HEK293 (cell line): ENCODE measurements at regions of chr15 and their contacts with region 1.

Region 1: DNA sequence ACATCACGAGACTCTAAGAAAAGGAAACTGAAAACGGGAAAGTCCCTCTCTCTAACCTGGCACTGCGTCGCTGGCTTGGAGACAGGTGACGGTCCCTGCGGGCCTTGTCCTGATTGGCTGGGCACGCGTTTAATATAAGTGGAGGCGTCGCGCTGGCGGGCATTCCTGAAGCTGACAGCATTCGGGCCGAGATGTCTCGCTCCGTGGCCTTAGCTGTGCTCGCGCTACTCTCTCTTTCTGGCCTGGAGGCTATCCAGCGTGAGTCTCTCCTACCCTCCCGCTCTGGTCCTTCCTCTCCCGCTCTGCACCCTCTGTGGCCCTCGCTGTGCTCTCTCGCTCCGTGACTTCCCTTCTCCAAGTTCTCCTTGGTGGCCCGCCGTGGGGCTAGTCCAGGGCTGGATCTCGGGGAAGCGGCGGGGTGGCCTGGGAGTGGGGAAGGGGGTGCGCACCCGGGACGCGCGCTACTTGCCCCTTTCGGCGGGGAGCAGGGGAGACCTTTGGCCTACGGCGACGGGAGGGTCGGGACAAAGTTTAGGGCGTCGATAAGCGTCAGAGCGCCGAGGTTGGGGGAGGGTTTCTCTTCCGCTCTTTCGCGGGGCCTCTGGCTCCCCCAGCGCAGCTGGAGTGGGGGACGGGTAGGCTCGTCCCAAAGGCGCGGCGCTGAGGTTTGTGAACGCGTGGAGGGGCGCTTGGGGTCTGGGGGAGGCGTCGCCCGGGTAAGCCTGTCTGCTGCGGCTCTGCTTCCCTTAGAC is at the start of gene B2M:
- H3K4me3 ChIP-seq: peak within 1 kb of the TSS; percentile 89
- H3K27ac ChIP-seq: peak within 1 kb of the TSS; percentile 69
- H3K4me1 ChIP-seq: no peaks in the 10 kb centered on the region
- CTCF ChIP-seq: no peak; the same call in 1 of the 2 replicates

Region 2: DNA sequence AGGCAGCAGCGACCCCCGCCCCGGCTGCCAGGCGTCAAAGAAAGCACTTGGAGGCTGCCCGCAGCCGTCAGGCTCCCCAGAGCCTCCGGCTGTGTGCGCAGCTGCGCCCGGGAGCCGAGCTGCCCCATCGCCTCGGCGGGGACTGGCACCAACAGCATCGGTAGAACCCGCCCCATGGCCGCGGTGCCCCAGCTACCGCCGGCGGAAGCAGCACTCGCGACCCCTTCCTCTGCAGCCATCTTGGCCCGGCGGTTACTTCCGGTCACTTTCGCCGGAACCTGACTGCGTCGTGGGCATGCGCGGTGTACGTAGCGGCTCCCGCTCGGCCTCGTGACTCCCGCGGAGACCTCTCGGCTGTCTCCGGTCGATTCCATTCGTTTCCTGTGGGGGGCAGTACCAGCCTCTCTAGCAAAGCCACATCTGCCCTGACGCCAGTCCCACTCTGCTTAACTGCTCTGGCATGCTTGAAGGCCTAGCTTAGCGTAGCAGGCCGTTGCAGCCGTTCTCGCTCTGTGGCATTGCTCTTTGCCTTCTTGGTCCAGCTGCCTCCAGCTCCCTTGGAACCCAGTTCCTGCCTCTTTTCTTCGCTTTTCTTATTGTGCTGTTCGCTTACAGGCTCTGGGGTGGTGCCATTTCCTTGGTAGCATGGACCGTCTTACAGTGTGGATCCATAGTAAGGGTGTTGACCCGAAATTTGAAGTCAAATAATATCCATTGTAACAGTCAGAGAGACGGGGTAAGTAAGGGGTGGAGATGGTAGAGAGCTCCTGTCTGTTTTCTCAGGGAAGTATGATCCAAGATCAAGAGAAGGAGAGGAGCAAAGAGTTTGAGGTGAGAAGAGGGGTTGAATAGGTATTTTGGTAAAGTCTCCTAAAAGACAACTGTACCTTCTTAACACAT is 47.9 kb before region 1 on chr15 and contains the start of gene SPG11:
- CTCF ChIA-PET with region 1: interaction called, 13 read pairs
- POLR2A ChIA-PET with region 1: interaction called, 28 read pairs
- H3K4me3 ChIP-seq: peak within 1 kb of the TSS; percentile 93
- H3K27ac ChIP-seq: peak within 1 kb of the TSS; percentile 63; the same call in 1 of the 2 replicates
- H3K4me1 ChIP-seq: no peaks in the 10 kb centered on the region
- CTCF ChIP-seq: peak; percentile 97

Region 3: DNA sequence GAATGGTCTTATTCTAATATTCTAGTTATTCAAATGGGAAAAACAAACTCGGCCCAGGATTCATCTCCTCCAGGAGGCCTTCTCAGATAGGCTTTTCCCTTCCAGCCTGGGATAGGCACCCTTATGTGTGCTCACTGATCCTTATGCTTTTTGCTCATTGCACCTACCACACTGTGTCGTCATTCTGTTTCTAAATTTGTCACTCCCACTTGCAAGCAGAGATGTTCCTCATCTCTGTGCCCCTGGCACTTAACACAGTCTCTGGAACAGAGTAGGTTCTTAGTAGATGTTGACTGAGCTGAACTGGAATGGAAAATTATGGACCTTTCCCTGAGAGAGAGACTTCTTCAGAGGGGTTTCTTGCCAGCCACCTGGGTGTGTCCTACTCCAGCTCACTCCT is 29.3 kb before region 1 on chr15:
- CTCF ChIA-PET with region 1: interaction called, 7 read pairs
- POLR2A ChIA-PET with region 1: interaction called, 15 read pairs
- H3K4me3 ChIP-seq: no peak overlapping the region
- H3K27ac ChIP-seq: no peak overlapping the region
- H3K4me1 ChIP-seq: peaks cover 3% of the 10 kb centered on the region; the same call in 1 of the 2 replicates
- CTCF ChIP-seq: no peak

Region 4: GRCh38 chr15:44728576-44729407 is 17.3 kb after region 1 on chr15:
- CTCF ChIA-PET with region 1: interaction called, 5 read pairs
- POLR2A ChIA-PET with region 1: interaction called, 37 read pairs
- H3K4me3 ChIP-seq: peak overlapping the region; percentile 69
- H3K27ac ChIP-seq: peak overlapping the region; percentile 85
- H3K4me1 ChIP-seq: peaks cover 7% of the 10 kb centered on the region; the same call in 1 of the 2 replicates
- CTCF ChIP-seq: no peak

Region 5: GRCh38 chr15:44738340-44738984 is 26.9 kb after region 1 on chr15:
- CTCF ChIA-PET with region 1: interaction called, 23 read pairs
- POLR2A ChIA-PET with region 1: interaction called, 16 read pairs
- H3K4me3 ChIP-seq: no peak overlapping the region
- H3K27ac ChIP-seq: no peak overlapping the region
- H3K4me1 ChIP-seq: no peaks in the 10 kb centered on the region
- CTCF ChIP-seq: no peak